Heart left ventricle (tissue), 16 donors: ENCODE measurements at regions of chr1 and their contacts with region 1.

Region 1: GRCh38 chr1:220089650-220090556 is at the start of gene BPNT1:
- DNase-seq: peak; percentile 92 to 96 (median 94)
- ATAC-seq: peak; percentile 79 to 91 (median 86)
- H3K4me3 ChIP-seq: peak within 1 kb of the TSS; percentile 25 to 75 (median 68)
- H3K27ac ChIP-seq: peak within 1 kb of the TSS in 10 of 12 donors; percentile 20 to 81 (median 64)
- H3K4me1 ChIP-seq: peaks cover 0 to 17% (median 5%) of the 10 kb centered on the region in 12 donors
- H3K27me3 ChIP-seq: no peaks in the 10 kb centered on the region
- CTCF ChIP-seq: no peak
- POLR2A ChIP-seq: peak in 1 of 2 donors; percentile 65
- total RNA-seq, gene BPNT1: 13.4 to 25.8 (median 18.8) TPM

Region 2: DNA sequence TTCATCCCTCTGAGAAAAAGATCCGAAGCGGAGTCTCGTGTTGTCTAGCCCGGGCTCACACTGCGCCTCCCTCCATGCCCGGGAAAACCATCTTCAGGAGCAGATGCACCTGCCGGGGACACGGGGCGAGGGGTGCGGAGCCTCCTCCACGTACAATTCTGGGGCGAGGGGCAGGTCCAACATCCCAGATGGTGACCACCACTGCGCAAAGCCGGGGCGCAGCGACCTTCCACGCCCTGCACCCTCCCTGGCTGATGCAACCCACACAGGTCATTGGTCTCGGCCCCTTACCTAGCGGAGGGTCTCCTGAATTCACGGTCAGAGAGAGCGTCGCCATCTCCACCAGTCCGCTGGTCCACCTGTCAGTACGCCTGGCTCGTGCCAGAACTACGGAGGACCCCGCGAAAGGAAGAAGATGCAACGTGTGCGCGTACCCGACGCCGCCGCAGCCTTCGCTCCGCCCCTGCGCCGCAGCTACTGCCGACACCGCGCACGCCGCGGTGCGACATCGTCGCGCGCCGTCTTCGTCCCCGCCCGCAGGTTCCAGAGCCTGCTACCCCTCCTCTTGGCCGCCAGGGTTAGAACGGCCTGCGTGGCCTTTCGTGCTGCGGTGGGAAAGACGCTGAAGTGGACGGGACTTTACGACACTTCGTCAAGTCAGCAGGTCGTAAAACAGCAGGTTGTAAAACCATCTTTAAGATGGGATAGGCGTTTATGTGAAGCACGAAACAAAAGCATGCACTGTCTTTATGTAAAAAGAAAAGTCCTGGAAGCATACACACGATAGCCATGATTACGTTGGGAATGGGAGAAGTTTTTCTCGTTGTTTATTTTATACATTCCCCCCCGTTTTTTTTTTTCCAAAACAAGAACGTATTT is 43.6 kb before region 1 on chr1 and contains the start of gene EPRS1:
- intact Hi-C with region 1: loop called in 5 of 10 experiments (anchors 2 to 5 kb)
- DNase-seq: peak; percentile 95 to 97 (median 96)
- ATAC-seq: peak; percentile 98 to 100 (median 100)
- H3K4me3 ChIP-seq: peak within 1 kb of the TSS; percentile 51 to 97 (median 84)
- H3K27ac ChIP-seq: peak within 1 kb of the TSS; percentile 71 to 90 (median 84)
- H3K4me1 ChIP-seq: peaks cover 0 to 32% (median 10%) of the 10 kb centered on the region in 12 donors
- H3K27me3 ChIP-seq: no peaks in the 10 kb centered on the region
- CTCF ChIP-seq: peak; percentile 63 to 94 (median 73)
- POLR2A ChIP-seq: peak in 1 of 2 donors; percentile 68
- total RNA-seq, gene EPRS1: 38.3 to 91.3 (median 65.3) TPM